ENCODE measurements at regions of chr14 and their contacts with region 1.

Region 1: DNA sequence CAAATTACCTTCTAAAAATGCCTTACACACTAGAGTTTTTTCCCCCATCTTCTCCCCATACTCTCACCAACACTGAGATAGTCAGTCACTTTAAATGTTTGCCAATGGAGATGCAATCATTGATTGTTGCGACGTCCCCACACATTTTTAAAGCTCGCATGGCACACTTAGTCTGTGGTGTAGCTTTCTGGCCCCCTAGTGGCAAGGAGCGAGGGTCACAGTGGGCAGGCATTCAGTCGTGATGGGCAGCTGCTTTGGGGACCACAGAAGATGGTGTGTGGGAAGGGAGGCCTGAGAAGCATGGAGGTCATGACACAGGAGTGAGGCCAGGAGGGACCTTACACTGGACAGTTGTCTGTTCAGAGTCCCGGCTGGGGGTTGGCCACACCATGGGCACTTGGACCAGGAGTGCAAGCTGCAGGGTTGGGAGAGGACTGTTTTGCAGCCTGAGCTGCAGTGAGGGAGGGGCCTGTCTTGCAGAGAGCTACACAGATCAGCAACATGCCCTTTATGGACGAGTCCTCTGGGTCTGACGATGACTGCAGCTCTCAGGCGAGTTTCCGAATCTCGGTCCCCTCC is 28.7 kb downstream of the PIGH start:
- DNase-seq: no peak
- H3K4me3 ChIP-seq: no peak overlapping the region
- H3K27ac ChIP-seq: no peak overlapping the region
- H3K4me1 ChIP-seq: peaks cover 0 to 17% (median 12%) of the 10 kb centered on the region in 3 donors
- H3K27me3 ChIP-seq: no peaks in the 10 kb centered on the region
- CTCF ChIP-seq: peak; percentile 70 to 81 (median 80)
- POLR2A ChIP-seq: no peak

Region 2: DNA sequence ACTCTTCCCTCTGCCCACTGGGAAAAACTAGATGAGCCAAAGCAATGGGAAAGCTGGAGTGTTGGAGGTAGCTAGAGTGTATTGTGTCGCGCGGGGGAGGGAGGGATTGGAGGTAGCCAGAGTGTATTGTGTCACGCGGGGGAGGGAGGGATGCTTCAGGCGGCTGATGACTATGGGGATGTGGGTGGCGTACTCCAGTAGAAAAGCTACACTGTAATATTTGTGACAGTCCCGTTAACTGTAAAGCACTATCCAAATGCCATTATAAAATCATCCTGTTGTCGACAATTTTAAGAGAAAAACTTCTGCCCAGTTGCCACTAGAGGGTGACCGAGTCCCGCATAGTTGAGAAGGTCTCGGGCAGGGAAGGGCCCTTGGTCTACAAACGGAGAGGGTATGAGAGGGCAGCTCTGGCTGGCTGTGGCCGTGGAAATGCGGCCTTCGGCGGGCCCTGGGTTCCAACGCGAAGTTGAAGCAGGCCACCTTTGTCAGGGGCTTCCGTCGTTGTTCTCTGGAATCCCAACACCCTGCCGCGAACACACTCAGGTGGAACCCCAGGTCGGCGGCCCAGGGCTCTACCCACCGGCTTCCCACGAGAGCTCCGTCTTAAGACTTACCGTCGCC is 144.3 kb before region 1 on chr14:
- intact Hi-C with region 1: loop called (anchors 10 kb)
- DNase-seq: no peak
- H3K4me3 ChIP-seq: peak overlapping the region in 1 of 4 donors; percentile 21
- H3K27ac ChIP-seq: no peak overlapping the region
- H3K4me1 ChIP-seq: peaks cover 3 to 8% (median 4%) of the 10 kb centered on the region in 3 donors
- H3K27me3 ChIP-seq: peaks cover 0 to 29% (median 0%) of the 10 kb centered on the region in 4 donors
- CTCF ChIP-seq: peak; percentile 66 to 88 (median 78)
- POLR2A ChIP-seq: no peak

Region 3: DNA sequence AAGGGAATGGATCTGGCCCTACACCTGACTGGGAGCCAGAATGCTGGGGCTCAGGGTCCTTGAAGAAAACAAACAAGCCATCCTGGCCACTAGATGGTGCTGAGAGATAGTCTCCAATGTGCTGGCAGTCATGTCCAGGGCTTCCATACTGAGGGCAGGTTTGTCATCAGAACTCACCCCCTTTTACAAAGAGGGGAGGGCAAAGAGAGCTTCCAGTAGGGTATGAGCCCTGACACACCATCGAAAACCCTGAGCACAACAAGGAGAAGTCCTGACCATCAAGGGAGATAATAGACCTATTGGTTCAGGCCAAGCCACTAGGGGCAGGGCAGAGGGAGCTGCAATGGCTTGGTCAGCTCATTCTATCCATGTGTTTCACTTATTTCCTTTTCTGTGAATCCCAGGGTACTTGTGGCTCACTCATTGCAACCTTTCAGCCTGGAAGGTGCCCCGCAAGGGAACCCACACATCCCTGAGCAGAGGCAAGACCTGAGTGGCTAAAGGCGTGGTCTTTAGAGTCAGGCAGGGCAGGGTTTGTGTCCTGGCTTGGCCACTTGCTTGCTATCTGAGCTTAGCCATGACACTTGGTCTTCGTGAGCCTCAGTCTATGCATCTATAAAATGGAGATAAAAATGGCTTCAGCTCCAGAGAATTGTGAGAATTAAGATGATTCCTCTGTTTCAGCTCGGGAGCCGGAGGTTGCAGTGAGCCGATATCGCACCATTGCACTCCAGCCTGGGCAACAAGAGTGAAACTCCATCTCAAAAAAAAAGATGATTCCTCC is 44.5 kb before region 1 on chr14:
- intact Hi-C with region 1: loop called (anchors 5 kb)
- DNase-seq: no peak
- H3K4me3 ChIP-seq: no peak overlapping the region
- H3K27ac ChIP-seq: no peak overlapping the region
- H3K4me1 ChIP-seq: peaks cover 0 to 11% (median 0%) of the 10 kb centered on the region in 3 donors
- H3K27me3 ChIP-seq: peaks cover 0 to 43% (median 0%) of the 10 kb centered on the region in 4 donors
- CTCF ChIP-seq: peak; percentile 48 to 71 (median 58)
- POLR2A ChIP-seq: no peak

Region 4: GRCh38 chr14:67963960-67964744 is 392.8 kb after region 1 on chr14:
- intact Hi-C with region 1: no loop called
- DNase-seq: no peak
- H3K4me3 ChIP-seq: peak overlapping the region; percentile 0 to 15 (median 10)
- H3K27ac ChIP-seq: peak overlapping the region; percentile 77 to 89 (median 86)
- H3K4me1 ChIP-seq: peaks cover 9 to 55% (median 25%) of the 10 kb centered on the region in 3 donors
- H3K27me3 ChIP-seq: no peaks in the 10 kb centered on the region
- CTCF ChIP-seq: no peak
- POLR2A ChIP-seq: no peak